CD8-positive, alpha-beta T cell (primary cell): ENCODE measurements at regions of chr1 and their contacts with region 1.

Region 1: GRCh38 chr1:52683367-52683940 is 14.7 kb downstream of the COA7 start:
- DNase-seq: no peak
- ATAC-seq: no peak
- H3K4me3 ChIP-seq: no peak overlapping the region
- H3K4me3 Mint-ChIP-seq: no peak overlapping the region
- H3K27ac ChIP-seq: no peak overlapping the region
- H3K27ac Mint-ChIP-seq: peak overlapping the region; percentile 45
- H3K4me1 ChIP-seq: peaks cover 6% of the 10 kb centered on the region
- H3K4me1 Mint-ChIP-seq: peaks cover 12% of the 10 kb centered on the region
- H3K27me3 ChIP-seq: no peaks in the 10 kb centered on the region
- H3K27me3 Mint-ChIP-seq: no peaks in the 10 kb centered on the region
- CTCF ChIP-seq: no peak

Region 2: DNA sequence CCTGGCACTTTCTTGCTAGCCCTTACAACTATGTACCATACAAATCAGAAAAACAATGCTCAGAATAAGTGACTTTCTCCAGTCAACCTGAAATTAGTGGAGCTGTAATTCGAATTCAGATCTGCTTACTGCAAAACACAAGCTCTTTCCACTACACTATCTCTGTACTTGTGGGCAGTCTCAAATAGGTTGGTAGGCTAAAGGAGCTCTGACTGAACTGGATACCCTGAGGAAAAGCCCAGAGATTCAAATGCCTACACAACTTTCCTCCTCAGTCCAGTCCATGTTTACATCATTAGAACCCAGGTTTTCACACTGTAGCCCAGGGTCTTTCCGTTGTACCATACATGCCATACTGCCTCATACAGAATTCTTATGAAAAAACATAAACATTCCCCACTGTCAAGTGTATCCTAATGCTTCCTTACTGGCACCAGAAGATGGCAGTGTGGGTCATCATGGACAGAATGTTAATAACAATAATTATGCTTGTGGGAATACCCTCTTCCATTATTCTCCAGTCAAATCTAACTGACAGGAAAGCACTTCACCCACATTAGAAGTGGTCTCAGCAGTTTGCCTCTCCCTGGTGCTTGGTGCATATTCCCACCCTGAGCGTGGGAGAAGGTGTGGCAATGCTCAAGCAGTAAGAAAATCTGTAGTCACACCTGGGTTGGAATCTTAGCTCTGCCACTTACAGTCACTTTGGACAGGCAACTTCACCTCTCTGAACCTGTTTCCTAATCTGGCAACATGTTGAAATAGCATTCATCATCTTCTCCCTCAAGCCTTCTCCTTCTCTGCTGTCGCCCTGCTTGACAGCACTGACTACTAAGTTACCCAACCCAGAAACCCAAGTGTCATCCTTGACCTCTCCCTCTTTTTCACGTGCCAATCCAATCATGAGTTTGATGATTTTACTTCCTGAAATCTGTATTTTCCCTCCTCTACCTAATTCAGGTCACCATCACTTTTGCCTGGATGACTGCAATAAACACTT is 556.0 kb before region 1 on chr1:
- CTCF ChIA-PET with region 1: interaction called, 4 read pairs
- POLR2A ChIA-PET with region 1: no interaction called
- intact Hi-C with region 1: loop called in 1 of 2 experiments (anchors 1 kb)
- DNase-seq: peak in 3 of 9 experiments; percentile 21 to 63 (median 57)
- ATAC-seq: no peak
- H3K4me3 ChIP-seq: no peak overlapping the region
- H3K4me3 Mint-ChIP-seq: no peak overlapping the region
- H3K27ac ChIP-seq: no peak overlapping the region
- H3K27ac Mint-ChIP-seq: no peak overlapping the region
- H3K4me1 ChIP-seq: no peaks in the 10 kb centered on the region
- H3K4me1 Mint-ChIP-seq: no peaks in the 10 kb centered on the region
- H3K27me3 ChIP-seq: no peaks in the 10 kb centered on the region
- H3K27me3 Mint-ChIP-seq: peaks cover 16% of the 10 kb centered on the region
- CTCF ChIP-seq: peak; percentile 41

Region 3: DNA sequence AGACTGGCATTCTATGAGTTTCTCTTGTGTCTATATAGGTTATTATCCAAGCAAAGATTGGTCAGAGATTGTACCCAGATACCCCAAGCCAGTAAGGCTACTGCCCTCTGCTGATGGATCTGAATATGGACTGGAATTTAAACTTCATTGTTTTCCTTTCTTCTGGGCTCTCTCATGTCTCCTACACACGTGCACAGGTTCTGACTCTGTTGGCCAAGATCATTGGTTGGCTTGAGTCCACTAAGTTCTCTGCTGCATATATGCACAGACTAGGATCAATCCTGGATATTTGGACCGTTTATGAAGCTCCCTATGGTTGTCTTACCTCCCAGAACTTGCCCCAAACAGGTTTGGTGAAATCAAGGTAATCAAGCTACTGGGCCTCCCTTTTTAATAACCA is 387.1 kb before region 1 on chr1:
- CTCF ChIA-PET with region 1: interaction called, 3 read pairs
- POLR2A ChIA-PET with region 1: interaction called, 5 read pairs
- intact Hi-C with region 1: loop called in 1 of 2 experiments (anchors 2 kb)
- DNase-seq: peak in 2 of 9 experiments; percentile 43 to 49
- ATAC-seq: peak; percentile 57
- H3K4me3 ChIP-seq: no peak overlapping the region
- H3K4me3 Mint-ChIP-seq: no peak overlapping the region
- H3K27ac ChIP-seq: no peak overlapping the region
- H3K27ac Mint-ChIP-seq: no peak overlapping the region
- H3K4me1 ChIP-seq: no peaks in the 10 kb centered on the region
- H3K4me1 Mint-ChIP-seq: no peaks in the 10 kb centered on the region
- H3K27me3 ChIP-seq: no peaks in the 10 kb centered on the region
- H3K27me3 Mint-ChIP-seq: no peaks in the 10 kb centered on the region
- CTCF ChIP-seq: peak; percentile 34

Region 4: DNA sequence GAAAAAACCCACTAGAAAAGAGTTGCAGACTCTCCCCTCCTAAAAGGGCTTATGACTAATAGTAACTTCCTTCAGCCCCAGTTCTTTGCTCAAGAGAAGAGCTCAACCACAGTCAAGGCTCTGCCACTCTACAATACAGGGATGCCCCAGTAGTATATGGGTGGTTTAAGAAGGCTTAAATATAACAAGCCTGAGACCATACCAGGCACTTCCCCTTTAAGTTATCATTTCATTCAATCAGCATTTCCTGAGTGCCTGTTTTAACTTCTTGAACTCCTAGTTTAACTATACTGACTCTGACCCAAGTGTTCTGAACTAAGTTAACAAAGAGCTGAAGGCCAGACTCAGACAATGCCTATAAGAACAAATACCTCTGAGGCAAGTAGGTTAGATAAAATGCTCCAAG is 259.2 kb before region 1 on chr1:
- CTCF ChIA-PET with region 1: interaction called, 4 read pairs
- POLR2A ChIA-PET with region 1: no interaction called
- intact Hi-C with region 1: loop called (anchors 5 kb)
- DNase-seq: peak in 8 of 9 experiments; percentile 11 to 81 (median 46)
- ATAC-seq: peak; percentile 91
- H3K4me3 ChIP-seq: no peak overlapping the region
- H3K4me3 Mint-ChIP-seq: peak overlapping the region; percentile 44
- H3K27ac ChIP-seq: peak overlapping the region; percentile 60 to 72
- H3K27ac Mint-ChIP-seq: peak overlapping the region; percentile 99
- H3K4me1 ChIP-seq: peaks cover 44% of the 10 kb centered on the region
- H3K4me1 Mint-ChIP-seq: peaks cover 41% of the 10 kb centered on the region
- H3K27me3 ChIP-seq: no peaks in the 10 kb centered on the region
- H3K27me3 Mint-ChIP-seq: no peaks in the 10 kb centered on the region
- CTCF ChIP-seq: no peak

Region 5: GRCh38 chr1:52552505-52553361 is 130.7 kb before region 1 on chr1 and contains the start of gene TUT4:
- CTCF ChIA-PET with region 1: interaction called, 7 read pairs
- POLR2A ChIA-PET with region 1: interaction called, 8 read pairs
- intact Hi-C with region 1: loop called (anchors 1 to 5 kb)
- DNase-seq: peak; percentile 55 to 87 (median 73)
- ATAC-seq: peak; percentile 56
- H3K4me3 ChIP-seq: peak within 1 kb of the TSS; percentile 87 to 96
- H3K4me3 Mint-ChIP-seq: peak within 1 kb of the TSS; percentile 70
- H3K27ac ChIP-seq: peak within 1 kb of the TSS; percentile 92 to 96
- H3K27ac Mint-ChIP-seq: peak within 1 kb of the TSS; percentile 69
- H3K4me1 ChIP-seq: peaks cover 35% of the 10 kb centered on the region
- H3K4me1 Mint-ChIP-seq: peaks cover 40% of the 10 kb centered on the region
- H3K27me3 ChIP-seq: no peaks in the 10 kb centered on the region
- H3K27me3 Mint-ChIP-seq: no peaks in the 10 kb centered on the region
- CTCF ChIP-seq: peak; percentile 8
- total RNA-seq, gene TUT4: 133 to 134 TPM

Region 6: GRCh38 chr1:52636721-52637695 is 46.4 kb before region 1 on chr1:
- CTCF ChIA-PET with region 1: interaction called, 5 read pairs
- POLR2A ChIA-PET with region 1: interaction called, 5 read pairs
- intact Hi-C with region 1: loop called (anchors 1 to 5 kb)
- DNase-seq: peak; percentile 44 to 91 (median 78)
- ATAC-seq: peak; percentile 60
- H3K4me3 ChIP-seq: peak overlapping the region; percentile 27 to 31
- H3K4me3 Mint-ChIP-seq: peak overlapping the region; percentile 77
- H3K27ac ChIP-seq: peak overlapping the region; percentile 89 to 99
- H3K27ac Mint-ChIP-seq: peak overlapping the region; percentile 99
- H3K4me1 ChIP-seq: peaks cover 83% of the 10 kb centered on the region
- H3K4me1 Mint-ChIP-seq: peaks cover 80% of the 10 kb centered on the region
- H3K27me3 ChIP-seq: no peaks in the 10 kb centered on the region
- H3K27me3 Mint-ChIP-seq: no peaks in the 10 kb centered on the region
- CTCF ChIP-seq: no peak